ENCODE measurements at regions of chr1 and their contacts with region 1.

Region 1: DNA sequence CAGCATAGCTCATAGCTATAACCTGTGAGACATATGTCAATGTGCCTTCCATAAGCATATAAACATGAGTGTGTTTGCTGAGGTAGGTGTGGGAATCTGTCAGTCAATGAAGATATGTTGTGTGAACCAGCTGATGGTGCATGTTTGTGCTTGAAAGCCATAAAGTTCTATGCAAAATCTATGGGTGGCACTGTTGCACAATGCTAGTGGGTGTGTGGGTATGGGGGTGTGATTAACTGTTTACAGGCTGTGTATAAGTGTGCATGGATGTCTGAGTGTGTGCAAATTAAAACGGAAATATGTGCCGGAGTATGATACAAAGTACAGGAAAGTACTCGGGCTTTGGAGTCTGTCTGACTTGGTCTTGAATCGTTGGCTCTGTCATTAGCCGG is 1.0 kb upstream of the ATP2B4 start:
- DNase-seq: no peak
- ATAC-seq: peak; percentile 44
- H3K4me3 Mint-ChIP-seq: peak overlapping the region; percentile 93
- H3K27ac Mint-ChIP-seq: peak overlapping the region; percentile 81
- H3K4me1 Mint-ChIP-seq: peaks cover 39% of the 10 kb centered on the region
- H3K27me3 Mint-ChIP-seq: no peaks in the 10 kb centered on the region

Region 2: GRCh38 chr1:203603940-203604591 is 21.6 kb before region 1 on chr1:
- POLR2A ChIA-PET with region 1: interaction called, 28 read pairs
- DNase-seq: no peak
- ATAC-seq: no peak
- H3K4me3 Mint-ChIP-seq: no peak overlapping the region
- H3K27ac Mint-ChIP-seq: peak overlapping the region; percentile 51
- H3K4me1 Mint-ChIP-seq: peaks cover 32% of the 10 kb centered on the region
- H3K27me3 Mint-ChIP-seq: no peaks in the 10 kb centered on the region

Region 3: GRCh38 chr1:203612932-203613682 is 12.5 kb before region 1 on chr1:
- POLR2A ChIA-PET with region 1: interaction called, 28 read pairs
- DNase-seq: no peak
- ATAC-seq: peak; percentile 87
- H3K4me3 Mint-ChIP-seq: peak overlapping the region; percentile 63
- H3K27ac Mint-ChIP-seq: peak overlapping the region; percentile 81
- H3K4me1 Mint-ChIP-seq: peaks cover 33% of the 10 kb centered on the region
- H3K27me3 Mint-ChIP-seq: no peaks in the 10 kb centered on the region

Region 4: GRCh38 chr1:203652724-203653461 is 27.3 kb after region 1 on chr1:
- POLR2A ChIA-PET with region 1: interaction called, 14 read pairs
- DNase-seq: no peak
- ATAC-seq: peak; percentile 53
- H3K4me3 Mint-ChIP-seq: peak overlapping the region; percentile 60
- H3K27ac Mint-ChIP-seq: peak overlapping the region; percentile 90
- H3K4me1 Mint-ChIP-seq: peaks cover 51% of the 10 kb centered on the region
- H3K27me3 Mint-ChIP-seq: peaks cover 3% of the 10 kb centered on the region

Region 5: DNA sequence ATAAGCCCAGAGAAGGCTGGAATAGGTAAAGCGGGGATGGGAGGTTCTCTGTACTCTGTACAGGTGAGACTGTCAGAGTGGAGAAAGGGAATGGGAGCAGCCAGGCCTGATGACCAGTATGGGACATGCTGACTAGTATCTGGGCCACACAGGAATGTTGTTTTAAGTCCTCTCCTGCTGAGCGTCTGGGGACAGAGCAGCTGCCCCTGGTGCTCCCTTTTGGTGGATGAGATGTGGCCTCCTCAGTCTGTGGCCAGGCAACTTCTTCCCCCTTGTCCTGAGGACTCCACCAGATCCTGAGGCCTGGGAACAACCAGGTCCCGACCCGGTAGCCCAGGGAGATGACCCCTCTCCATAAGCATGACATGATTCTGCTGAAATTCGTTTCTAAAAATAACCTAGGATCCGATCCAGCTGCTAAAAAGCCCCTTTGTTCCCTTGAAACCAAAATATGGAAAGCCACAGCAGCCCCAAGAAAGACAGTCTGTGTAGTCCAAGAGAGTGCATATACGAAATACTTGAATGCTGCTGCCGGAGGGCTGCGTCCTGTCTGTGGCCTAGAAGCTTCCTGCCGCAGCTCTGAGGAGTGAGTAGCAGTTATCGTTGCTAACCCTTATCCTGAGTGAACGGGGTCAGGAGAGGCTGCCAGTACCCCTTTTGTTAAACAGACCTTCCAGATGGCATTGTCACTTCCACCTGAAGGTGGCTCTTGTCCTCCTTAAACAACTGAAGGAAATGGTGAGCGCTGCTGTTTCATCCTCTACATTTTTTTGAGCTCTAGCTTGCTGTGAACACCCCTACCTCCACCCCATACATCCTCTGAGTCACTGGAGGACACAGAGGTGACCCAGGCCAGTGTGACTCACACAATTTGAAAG is 48.2 kb after region 1 on chr1:
- POLR2A ChIA-PET with region 1: interaction called, 16 read pairs
- DNase-seq: peak; percentile 81
- ATAC-seq: peak; percentile 93
- H3K4me3 Mint-ChIP-seq: peak overlapping the region; percentile 77
- H3K27ac Mint-ChIP-seq: peak overlapping the region; percentile 94
- H3K4me1 Mint-ChIP-seq: peaks cover 45% of the 10 kb centered on the region
- H3K27me3 Mint-ChIP-seq: no peaks in the 10 kb centered on the region

Region 6: GRCh38 chr1:203682473-203683383 is 57.1 kb after region 1 on chr1:
- POLR2A ChIA-PET with region 1: interaction called, 12 read pairs
- DNase-seq: peak; percentile 48
- ATAC-seq: peak; percentile 91
- H3K4me3 Mint-ChIP-seq: peak overlapping the region; percentile 26
- H3K27ac Mint-ChIP-seq: peak overlapping the region; percentile 82
- H3K4me1 Mint-ChIP-seq: peaks cover 29% of the 10 kb centered on the region
- H3K27me3 Mint-ChIP-seq: no peaks in the 10 kb centered on the region

Region 7: GRCh38 chr1:204072931-204073836 is 447.6 kb after region 1 on chr1 and contains the start of gene SOX13:
- POLR2A ChIA-PET with region 1: no interaction called
- DNase-seq: peak; percentile 48
- ATAC-seq: peak; percentile 59
- H3K4me3 Mint-ChIP-seq: peak within 1 kb of the TSS; percentile 68
- H3K27ac Mint-ChIP-seq: no peak within 1 kb of the TSS
- H3K4me1 Mint-ChIP-seq: peaks cover 8% of the 10 kb centered on the region
- H3K27me3 Mint-ChIP-seq: peaks cover 80% of the 10 kb centered on the region
- total RNA-seq, gene SOX13: 3.9 to 4.0 TPM